ENCODE measurements at regions of chr11 and their contacts with region 1.

Region 1: GRCh38 chr11:127345819-127346459 is 345.4 kb upstream of the KIRREL3 start:
- DNase-seq: peak in 1 of 2 experiments; percentile 69
- H3K4me3 ChIP-seq: no peak overlapping the region
- H3K27ac ChIP-seq: no peak overlapping the region
- H3K4me1 ChIP-seq: no peaks in the 10 kb centered on the region; a peak in 1 of 7 replicates
- H3K27me3 ChIP-seq: peaks cover 0 to 1% (median 0%) of the 10 kb centered on the region in 4 experiments; a peak in 1 of 7 replicates
- CTCF ChIP-seq: peak; percentile 37 to 67 (median 65)
- EP300 ChIP-seq: no peak
- POLR2A ChIP-seq: no peak
- RAD21 ChIP-seq: peak; percentile 74 to 77

Region 2: DNA sequence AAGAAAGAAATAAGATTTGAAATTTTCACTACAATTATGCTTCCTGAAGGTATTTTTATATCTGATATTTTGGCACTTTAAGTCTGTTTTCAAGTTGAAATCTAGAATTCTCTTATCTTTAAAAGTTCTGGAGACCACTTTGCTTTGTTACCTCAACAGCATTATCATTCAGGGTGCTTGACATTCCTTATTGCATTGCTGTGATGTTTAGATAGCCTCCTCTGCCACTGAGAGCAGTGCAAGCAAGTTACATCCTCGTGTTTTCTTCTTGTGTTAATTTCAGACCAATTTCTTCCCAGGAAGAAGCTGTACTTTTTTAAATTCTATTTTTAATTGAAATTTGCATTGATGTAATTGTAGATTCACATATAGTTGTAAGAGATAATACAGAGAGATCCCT is 11.5 kb before region 1 on chr11:
- CTCF ChIA-PET with region 1: interaction called, 16 read pairs
- POLR2A ChIA-PET with region 1: no interaction called
- DNase-seq: no peak
- H3K4me3 ChIP-seq: no peak overlapping the region
- H3K27ac ChIP-seq: no peak overlapping the region
- H3K4me1 ChIP-seq: peaks cover 0 to 9% (median 3%) of the 10 kb centered on the region in 4 experiments; a peak in 2 of 7 replicates
- H3K27me3 ChIP-seq: no peaks in the 10 kb centered on the region
- CTCF ChIP-seq: no peak
- EP300 ChIP-seq: no peak
- POLR2A ChIP-seq: no peak
- RAD21 ChIP-seq: no peak

Region 3: GRCh38 chr11:127601578-127601977 is 255.6 kb after region 1 on chr11:
- CTCF ChIA-PET with region 1: no interaction called
- POLR2A ChIA-PET with region 1: no interaction called
- DNase-seq: no peak
- H3K4me3 ChIP-seq: no peak overlapping the region
- H3K27ac ChIP-seq: no peak overlapping the region
- H3K4me1 ChIP-seq: peaks cover 0 to 4% (median 0%) of the 10 kb centered on the region in 4 experiments; a peak in 3 of 7 replicates
- H3K27me3 ChIP-seq: no peaks in the 10 kb centered on the region
- CTCF ChIP-seq: no peak
- EP300 ChIP-seq: no peak
- POLR2A ChIP-seq: no peak
- RAD21 ChIP-seq: peak in 1 of 2 experiments; percentile 33; a peak in 2 of 4 replicates